ENCODE measurements at regions of chr2 and their contacts with region 1.

Region 1: GRCh38 chr2:24490674-24491625 is at the start of gene NCOA1:
- DNase-seq: peak; percentile 75
- ATAC-seq: peak; percentile 94
- H3K4me3 ChIP-seq: peak within 1 kb of the TSS; percentile 65 to 75
- H3K27ac ChIP-seq: peak within 1 kb of the TSS; percentile 44
- H3K4me1 ChIP-seq: peaks cover 8 to 24% of the 10 kb centered on the region in 2 experiments
- H3K27me3 ChIP-seq: peaks cover 3% of the 10 kb centered on the region; the same call in 1 of the 2 replicates
- CTCF ChIP-seq: no peak
- POLR2A ChIP-seq: peak; percentile 10
- RAD21 ChIP-seq: no peak
- total RNA-seq, gene NCOA1: 10.4 TPM

Region 2: GRCh38 chr2:24792874-24793760 is 302.2 kb after region 1 on chr2 and contains the starts of genes CENPO and PTRHD1:
- CTCF ChIA-PET with region 1: no interaction called
- POLR2A ChIA-PET with region 1: no interaction called
- RAD21 ChIA-PET with region 1: no interaction called
- intact Hi-C with region 1: loop called (anchors 2 kb)
- DNase-seq: peak; percentile 94
- ATAC-seq: peak; percentile 90
- H3K4me3 ChIP-seq: peak within 1 kb of the TSS; percentile 59 to 97
- H3K27ac ChIP-seq: peak within 1 kb of the TSS; percentile 91
- H3K4me1 ChIP-seq: peaks cover 12 to 34% of the 10 kb centered on the region in 2 experiments
- H3K27me3 ChIP-seq: no peaks in the 10 kb centered on the region
- CTCF ChIP-seq: peak in 2 of 3 experiments; percentile 59 to 60; a peak in 4 of 6 replicates
- POLR2A ChIP-seq: peak; percentile 87
- RAD21 ChIP-seq: peak; percentile 41
- total RNA-seq, gene CENPO: 27.9 TPM
- total RNA-seq, gene PTRHD1: 24.3 TPM